ENCODE measurements at regions of chr9 and their contacts with region 1.

Region 1: GRCh38 chr9:19614294-19614693 is 174.5 kb downstream of the SLC24A2 start:
- DNase-seq: no peak
- ATAC-seq: no peak
- H3K4me3 Mint-ChIP-seq: no peak overlapping the region
- H3K27ac Mint-ChIP-seq: no peak overlapping the region
- H3K4me1 Mint-ChIP-seq: no peaks in the 10 kb centered on the region
- H3K27me3 Mint-ChIP-seq: peaks cover 9% of the 10 kb centered on the region
- CTCF ChIP-seq: no peak

Region 2: GRCh38 chr9:19527663-19528062 is 86.6 kb before region 1 on chr9:
- CTCF ChIA-PET with region 1: no interaction called
- POLR2A ChIA-PET with region 1: no interaction called
- intact Hi-C with region 1: loop called (anchors 5 kb)
- DNase-seq: no peak
- ATAC-seq: no peak
- H3K4me3 Mint-ChIP-seq: no peak overlapping the region
- H3K27ac Mint-ChIP-seq: no peak overlapping the region
- H3K4me1 Mint-ChIP-seq: no peaks in the 10 kb centered on the region
- H3K27me3 Mint-ChIP-seq: peaks cover 9% of the 10 kb centered on the region
- CTCF ChIP-seq: no peak

Region 3: DNA sequence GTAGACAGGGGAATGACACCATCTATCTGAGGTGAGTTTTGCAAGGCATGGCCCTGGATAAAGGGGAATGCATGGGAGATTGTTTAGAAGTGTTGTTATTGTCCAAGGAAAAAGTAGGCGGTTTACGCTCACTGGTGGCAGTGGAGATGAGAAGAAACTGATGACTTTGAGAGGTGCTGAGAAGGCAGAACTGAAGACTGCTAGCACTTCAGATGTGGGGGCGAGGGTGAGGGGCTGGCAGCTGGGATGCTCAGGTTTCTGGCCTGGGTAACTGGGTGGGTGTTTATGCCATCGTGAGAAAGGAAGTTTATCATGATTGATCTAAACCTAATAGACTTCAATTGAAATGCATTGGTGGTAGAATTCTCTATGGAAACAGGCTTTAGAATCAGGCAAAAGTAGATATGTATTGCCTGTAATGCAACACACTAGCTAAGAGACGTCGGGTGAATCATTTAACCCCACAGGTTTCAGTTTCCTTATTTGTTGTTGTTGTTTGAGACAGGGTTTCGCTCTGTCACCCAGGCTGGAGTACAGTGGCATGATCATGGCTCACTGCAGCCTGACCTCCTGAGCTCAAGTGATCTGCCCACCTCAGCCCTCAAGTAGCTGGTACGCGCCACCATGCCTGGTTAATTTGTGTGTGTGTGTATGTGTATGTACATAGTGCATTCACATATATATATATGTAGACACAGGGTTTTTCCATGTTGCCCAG is 51.0 kb after region 1 on chr9:
- CTCF ChIA-PET with region 1: no interaction called
- POLR2A ChIA-PET with region 1: no interaction called
- intact Hi-C with region 1: no loop called
- DNase-seq: peak; percentile 13
- ATAC-seq: peak; percentile 72
- H3K4me3 Mint-ChIP-seq: no peak overlapping the region
- H3K27ac Mint-ChIP-seq: no peak overlapping the region
- H3K4me1 Mint-ChIP-seq: peaks cover 4% of the 10 kb centered on the region
- H3K27me3 Mint-ChIP-seq: peaks cover 10% of the 10 kb centered on the region
- CTCF ChIP-seq: no peak